GM18951 (cell line): ENCODE measurements at regions of chr7 and their contacts with region 1.

Region 1: GRCh38 chr7:23712368-23713284 is 2.6 kb downstream of the STK31 start:
- POLR2A ChIP-seq: no peak

Region 2: DNA sequence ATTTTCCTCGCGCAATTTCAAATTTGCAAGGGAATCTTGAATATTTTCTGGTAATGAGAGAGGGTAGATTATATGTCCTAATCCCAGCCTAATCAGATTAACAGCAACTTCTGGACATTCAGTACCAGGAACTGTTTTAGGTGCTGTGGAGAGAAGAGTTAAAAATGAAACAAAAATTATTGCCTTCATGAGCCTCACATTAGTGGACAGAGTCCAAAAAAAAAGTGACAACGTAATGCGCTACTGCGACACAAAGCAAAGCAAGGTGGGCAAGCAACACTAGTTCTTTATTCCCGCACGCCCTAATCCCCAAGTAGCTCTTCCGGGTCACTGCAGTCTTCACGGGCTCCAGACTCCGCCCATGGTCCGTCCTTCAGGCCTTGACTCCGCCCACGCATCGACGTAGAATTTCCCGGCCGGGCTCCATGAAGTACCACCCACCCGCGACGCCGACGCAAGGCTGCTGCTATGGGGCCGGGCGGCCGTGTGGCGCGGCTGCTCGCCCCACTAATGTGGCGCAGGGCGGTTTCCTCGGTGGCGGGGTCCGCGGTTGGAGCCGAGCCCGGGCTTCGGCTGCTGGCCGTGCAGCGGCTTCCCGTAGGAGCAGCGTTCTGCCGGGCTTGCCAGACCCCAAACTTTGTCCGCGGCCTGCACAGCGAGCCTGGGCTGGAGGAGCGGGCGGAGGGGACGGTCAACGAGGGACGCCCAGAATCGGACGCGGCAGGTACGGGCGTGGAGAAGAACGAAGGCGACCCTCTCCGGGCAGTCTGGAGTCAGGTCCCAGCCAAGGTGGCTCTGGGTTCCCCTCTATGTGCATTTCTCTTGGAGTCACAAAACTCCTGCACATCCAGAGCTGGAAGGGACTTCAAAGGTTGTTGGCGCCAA is 413.5 kb before region 1 on chr7 and contains the start of gene MALSU1:
- in situ Hi-C with region 1: loop called (anchors 25 kb)
- POLR2A ChIP-seq: peak; percentile 94

Region 3: GRCh38 chr7:23520582-23520981 is 192.0 kb before region 1 on chr7:
- in situ Hi-C with region 1: no loop called
- POLR2A ChIP-seq: no peak

Region 4: DNA sequence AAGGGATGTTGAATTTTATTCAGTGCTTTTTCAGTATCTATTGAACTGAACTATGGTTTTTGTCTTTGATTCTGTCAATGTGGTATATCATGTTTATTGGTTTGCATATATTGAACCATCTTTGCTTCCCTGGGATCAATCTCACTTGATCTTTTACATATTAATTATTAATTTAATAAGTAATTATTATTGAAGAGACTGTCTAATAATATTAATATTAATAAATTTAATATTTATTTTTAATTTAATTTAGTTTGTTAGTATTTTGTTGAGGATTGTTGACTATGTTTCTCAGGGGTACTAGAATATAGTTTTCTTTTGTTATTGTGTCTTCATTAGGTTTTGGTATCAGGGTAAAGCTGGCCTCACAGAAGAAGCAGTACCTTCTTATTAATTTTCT is 154.3 kb before region 1 on chr7:
- in situ Hi-C with region 1: loop called (anchors 5 kb)
- POLR2A ChIP-seq: no peak

Region 5: GRCh38 chr7:24135003-24135817 is 422.6 kb after region 1 on chr7:
- in situ Hi-C with region 1: no loop called
- POLR2A ChIP-seq: no peak

Region 6: GRCh38 chr7:24483804-24484203 is 771.2 kb after region 1 on chr7:
- in situ Hi-C with region 1: no loop called
- POLR2A ChIP-seq: no peak